ENCODE measurements at regions of chr19 and their contacts with region 1.

Region 1: GRCh38 chr19:52189735-52190486 is at the start of gene PPP2R1A:
- DNase-seq: peak; percentile 100
- ATAC-seq: peak; percentile 91
- H3K4me3 ChIP-seq: peak within 1 kb of the TSS; percentile 86
- H3K27ac ChIP-seq: peak within 1 kb of the TSS; percentile 86
- H3K4me1 ChIP-seq: peaks cover 18% of the 10 kb centered on the region
- H3K27me3 ChIP-seq: no peaks in the 10 kb centered on the region
- CTCF ChIP-seq: no peak
- total RNA-seq, gene PPP2R1A: 336 and 427 TPM in 2 replicates

Region 2: GRCh38 chr19:52139252-52140031 is 50.5 kb before region 1 on chr19 and contains the start of gene ZNF616:
- CTCF ChIA-PET with region 1: interaction called, 6 read pairs
- POLR2A ChIA-PET with region 1: interaction called, 48 read pairs
- intact Hi-C with region 1: loop called (anchors 1 kb)
- DNase-seq: peak; percentile 96
- ATAC-seq: peak; percentile 92
- H3K4me3 ChIP-seq: peak within 1 kb of the TSS; percentile 91
- H3K27ac ChIP-seq: peak within 1 kb of the TSS; percentile 81
- H3K4me1 ChIP-seq: peaks cover 7% of the 10 kb centered on the region; the same call in 1 of the 2 replicates
- H3K27me3 ChIP-seq: no peaks in the 10 kb centered on the region
- CTCF ChIP-seq: peak; percentile 90
- total RNA-seq, gene ZNF616: 3.7 and 3.9 TPM in 2 replicates

Region 3: GRCh38 chr19:52148256-52148655 is 41.7 kb before region 1 on chr19:
- CTCF ChIA-PET with region 1: no interaction called
- POLR2A ChIA-PET with region 1: interaction called, 10 read pairs
- intact Hi-C with region 1: no loop called
- DNase-seq: no peak
- ATAC-seq: no peak
- H3K4me3 ChIP-seq: no peak overlapping the region
- H3K27ac ChIP-seq: no peak overlapping the region
- H3K4me1 ChIP-seq: no peaks in the 10 kb centered on the region
- H3K27me3 ChIP-seq: no peaks in the 10 kb centered on the region
- CTCF ChIP-seq: no peak

Region 4: DNA sequence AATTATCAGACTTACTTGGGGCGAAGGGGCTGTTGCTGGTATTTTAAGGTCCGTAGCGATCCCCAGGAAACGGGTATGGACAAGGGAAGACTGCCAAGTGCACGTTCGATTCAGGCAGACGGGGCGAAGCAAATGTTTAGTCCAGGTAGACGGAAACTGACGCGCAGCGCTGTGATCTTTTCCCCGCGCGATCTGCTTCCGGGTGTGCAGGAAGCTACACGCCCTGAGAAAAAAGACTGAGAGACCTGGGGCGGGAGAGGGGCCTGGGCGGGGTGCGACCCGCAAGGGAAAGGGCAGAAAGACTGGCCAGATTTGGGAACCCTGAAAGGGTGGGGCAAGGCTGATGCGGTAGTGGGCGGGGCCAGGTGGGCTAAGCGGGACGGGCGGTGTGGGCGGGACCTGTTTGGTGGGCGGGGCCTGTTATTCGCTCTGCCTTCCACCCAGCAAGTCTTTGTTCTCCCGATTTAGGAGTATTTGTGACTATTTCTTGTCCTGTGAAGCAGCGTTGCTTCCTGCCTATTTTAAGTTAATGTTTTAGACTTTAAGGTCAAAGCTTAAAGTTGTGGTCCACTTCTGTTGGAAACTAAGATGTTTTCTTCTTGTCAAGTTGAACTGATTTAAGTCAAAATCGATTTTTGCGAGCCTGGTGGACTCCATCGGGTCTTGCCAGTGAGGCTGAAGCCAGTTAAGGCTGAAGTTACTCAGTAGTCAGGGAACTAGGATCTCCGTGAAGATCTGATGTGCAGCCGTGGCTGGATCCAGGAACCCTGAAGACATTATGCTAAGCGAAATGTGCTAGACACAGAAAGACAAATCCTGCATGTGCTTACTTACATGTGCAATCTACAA is 18.4 kb before region 1 on chr19 and contains the start of gene ZNF836:
- CTCF ChIA-PET with region 1: no interaction called
- POLR2A ChIA-PET with region 1: no interaction called
- intact Hi-C with region 1: loop called (anchors 2 kb)
- DNase-seq: peak; percentile 71
- ATAC-seq: peak; percentile 91
- H3K4me3 ChIP-seq: peak within 1 kb of the TSS; percentile 82
- H3K27ac ChIP-seq: no peak within 1 kb of the TSS
- H3K4me1 ChIP-seq: no peaks in the 10 kb centered on the region
- H3K27me3 ChIP-seq: no peaks in the 10 kb centered on the region
- CTCF ChIP-seq: no peak
- total RNA-seq, gene ZNF836: 2.6 and 8.0 TPM in 2 replicates

Region 5: GRCh38 chr19:52227196-52227940 is 37.5 kb after region 1 on chr19:
- CTCF ChIA-PET with region 1: no interaction called
- POLR2A ChIA-PET with region 1: no interaction called
- intact Hi-C with region 1: no loop called
- DNase-seq: no peak
- ATAC-seq: no peak
- H3K4me3 ChIP-seq: no peak overlapping the region
- H3K27ac ChIP-seq: no peak overlapping the region
- H3K4me1 ChIP-seq: 0 out of 2 replicates have a peak, but pooled peaks cover 5% of the 10 kb centered on the region
- H3K27me3 ChIP-seq: no peaks in the 10 kb centered on the region
- CTCF ChIP-seq: no peak

Region 6: GRCh38 chr19:52248241-52248640 is 58.3 kb after region 1 on chr19:
- CTCF ChIA-PET with region 1: no interaction called
- POLR2A ChIA-PET with region 1: no interaction called
- intact Hi-C with region 1: no loop called
- DNase-seq: peak; percentile 60
- ATAC-seq: peak; percentile 73
- H3K4me3 ChIP-seq: no peak overlapping the region
- H3K27ac ChIP-seq: no peak overlapping the region
- H3K4me1 ChIP-seq: no peaks in the 10 kb centered on the region
- H3K27me3 ChIP-seq: no peaks in the 10 kb centered on the region
- CTCF ChIP-seq: peak; percentile 65

Region 7: DNA sequence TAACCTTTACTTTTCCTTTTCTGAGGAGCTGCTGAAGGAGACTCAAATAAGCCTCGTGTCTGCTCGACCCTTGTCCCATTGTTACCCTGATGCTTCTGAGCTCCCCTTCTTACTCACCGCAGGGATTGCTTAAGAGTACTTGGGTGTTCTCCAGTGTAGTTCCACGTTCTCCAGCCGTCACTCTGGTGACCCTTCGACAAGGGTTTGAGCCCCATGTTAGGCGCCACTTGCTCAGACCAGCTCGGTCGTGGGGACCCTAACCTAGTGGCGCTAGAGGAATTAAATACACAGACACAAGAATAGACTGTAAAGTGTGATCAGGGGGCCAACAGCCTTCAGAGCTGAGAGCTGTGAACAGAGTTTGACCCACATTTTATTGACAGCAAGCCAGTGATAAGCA is 117.4 kb after region 1 on chr19:
- CTCF ChIA-PET with region 1: no interaction called
- POLR2A ChIA-PET with region 1: no interaction called
- intact Hi-C with region 1: no loop called
- DNase-seq: no peak
- ATAC-seq: no peak
- H3K4me3 ChIP-seq: no peak overlapping the region; the same call in 1 of the 2 replicates
- H3K27ac ChIP-seq: no peak overlapping the region
- H3K4me1 ChIP-seq: no peaks in the 10 kb centered on the region
- H3K27me3 ChIP-seq: no peaks in the 10 kb centered on the region
- CTCF ChIP-seq: no peak

Region 8: DNA sequence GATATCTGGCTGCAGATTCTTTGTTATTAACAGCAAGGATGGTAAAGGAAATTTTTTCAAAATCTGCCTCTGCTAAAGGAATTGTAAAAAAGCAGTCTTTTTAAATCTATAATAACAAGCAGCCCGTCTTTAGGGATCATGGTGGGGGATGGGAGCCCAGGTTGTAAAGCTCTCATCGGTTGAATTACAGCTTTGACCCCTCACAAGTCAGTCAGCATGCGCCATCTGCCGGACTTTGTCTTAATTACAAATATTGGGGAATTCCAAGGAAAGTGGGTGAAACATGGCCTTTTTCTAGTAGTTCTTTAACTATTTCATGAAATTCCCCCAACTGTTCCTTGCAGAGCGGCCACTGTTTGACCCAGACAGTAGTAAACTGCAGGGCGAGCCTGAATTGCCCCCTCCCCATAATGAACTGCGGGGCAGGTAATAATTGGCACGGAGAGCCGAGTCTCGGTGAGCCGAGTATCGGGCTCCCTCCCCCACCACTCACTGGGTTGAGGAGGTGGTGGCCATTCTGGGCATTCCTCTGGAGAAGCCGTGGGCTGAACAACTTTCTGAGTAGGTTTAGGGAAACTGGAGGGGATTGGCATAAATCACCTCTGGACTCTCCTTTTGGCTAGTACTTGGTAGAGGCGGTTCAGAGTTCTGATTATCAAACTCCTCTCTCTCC is 275.0 kb after region 1 on chr19:
- CTCF ChIA-PET with region 1: no interaction called
- POLR2A ChIA-PET with region 1: no interaction called
- intact Hi-C with region 1: no loop called
- DNase-seq: no peak
- ATAC-seq: no peak
- H3K4me3 ChIP-seq: no peak overlapping the region
- H3K27ac ChIP-seq: no peak overlapping the region
- H3K4me1 ChIP-seq: no peaks in the 10 kb centered on the region
- H3K27me3 ChIP-seq: no peaks in the 10 kb centered on the region
- CTCF ChIP-seq: peak; percentile 28; the same call in 1 of the 2 replicates